ENCODE measurements at regions of chr16 and their contacts with region 1.

Region 1: GRCh38 chr16:11535471-11535870 is 51.2 kb downstream of the LITAF start:
- DNase-seq: no peak
- ATAC-seq: peak in 3 of 4 donors; percentile 17 to 43 (median 23)
- H3K4me3 ChIP-seq: no peak overlapping the region
- H3K27ac ChIP-seq: no peak overlapping the region
- H3K4me1 ChIP-seq: no peaks in the 10 kb centered on the region
- H3K27me3 ChIP-seq: no peaks in the 10 kb centered on the region
- CTCF ChIP-seq: no peak

Region 2: DNA sequence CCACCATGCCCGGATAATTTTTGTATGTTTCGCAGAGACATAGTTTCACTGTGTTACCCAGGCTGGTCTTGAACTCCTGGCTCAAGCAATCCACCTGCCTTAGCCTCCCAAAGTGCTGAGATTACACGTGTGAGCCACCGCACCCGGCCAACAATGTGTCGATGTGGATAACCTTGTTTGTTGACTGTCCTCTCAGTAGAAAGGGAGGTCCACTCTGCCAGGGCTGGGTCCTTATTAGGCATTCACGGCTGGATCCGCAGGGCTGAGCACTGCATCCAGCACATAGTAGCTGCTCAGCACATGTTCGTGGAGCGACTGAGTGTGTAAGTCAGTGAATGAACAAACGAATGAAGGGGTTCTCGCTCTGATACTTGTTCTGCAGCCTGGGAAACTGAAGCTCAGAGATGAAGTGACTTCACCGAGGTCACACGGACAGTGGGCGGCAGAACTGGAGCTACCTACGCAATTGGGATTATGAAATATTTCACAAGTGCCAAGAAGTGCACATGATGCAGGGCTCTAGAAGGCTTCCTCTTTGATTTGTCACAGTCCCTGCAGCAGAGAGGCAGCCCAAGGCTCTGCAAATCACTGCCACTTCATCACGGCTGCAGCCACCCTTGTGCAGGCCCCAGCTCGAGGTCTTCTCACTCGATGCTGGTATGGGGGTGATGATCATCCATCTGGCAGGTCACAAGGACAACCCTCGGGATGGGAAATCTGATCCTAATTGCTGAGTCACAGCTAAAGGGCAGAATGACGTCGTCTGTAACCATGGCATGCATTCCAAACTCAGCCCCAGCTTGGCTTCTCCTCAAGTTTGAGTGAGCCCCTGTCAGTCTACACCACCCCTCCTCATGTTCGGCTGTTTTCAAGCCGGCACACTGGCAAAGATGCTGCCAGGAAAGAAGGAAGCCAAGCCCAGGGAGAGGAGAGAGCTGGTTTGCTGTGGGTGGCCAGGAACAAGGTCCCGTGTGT is 104.7 kb after region 1 on chr16:
- intact Hi-C with region 1: loop called in 1 of 3 experiments (anchors 5 kb)
- DNase-seq: peak; percentile 60 to 86 (median 71)
- ATAC-seq: peak; percentile 72 to 93 (median 82)
- H3K4me3 ChIP-seq: no peak overlapping the region
- H3K27ac ChIP-seq: peak overlapping the region; percentile 54 to 92 (median 72)
- H3K4me1 ChIP-seq: peaks cover 5 to 22% (median 17%) of the 10 kb centered on the region in 3 donors
- H3K27me3 ChIP-seq: no peaks in the 10 kb centered on the region
- CTCF ChIP-seq: no peak

Region 3: DNA sequence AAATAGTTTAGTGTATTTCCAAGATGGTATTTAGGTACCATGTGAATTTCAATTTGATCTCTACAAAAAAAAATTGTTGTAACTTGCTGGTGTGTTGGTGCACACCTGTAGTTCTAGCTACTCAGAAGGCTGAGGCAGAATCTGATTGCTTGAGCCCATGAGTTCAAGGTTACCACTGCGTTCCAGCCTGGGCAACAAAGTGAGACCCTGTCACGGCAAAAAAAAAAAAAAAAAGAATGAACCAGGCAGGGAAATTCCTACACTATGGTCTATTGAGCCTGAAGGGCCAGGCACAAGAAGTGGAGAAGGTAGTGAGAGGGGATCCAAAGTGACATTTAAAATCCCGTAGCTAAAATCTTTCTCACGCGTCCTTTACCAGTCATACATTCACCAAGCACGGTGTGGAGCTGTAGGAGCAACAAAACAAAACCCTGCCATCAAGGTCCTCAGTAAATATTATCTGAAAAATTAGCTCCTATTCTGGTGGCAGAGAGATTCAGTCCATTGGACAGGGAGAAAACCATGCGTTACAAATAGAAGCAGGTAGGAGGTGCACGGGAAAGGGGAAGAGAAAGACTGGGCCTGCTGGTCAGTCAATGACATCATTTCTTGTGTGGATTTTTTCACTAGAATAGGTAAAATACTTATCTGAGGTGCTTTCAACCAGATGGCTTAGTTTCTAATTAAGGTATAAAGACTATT is 179.9 kb after region 1 on chr16:
- intact Hi-C with region 1: loop called in 1 of 3 experiments (anchors 10 kb)
- DNase-seq: no peak
- ATAC-seq: peak; percentile 47 to 75 (median 63)
- H3K4me3 ChIP-seq: no peak overlapping the region
- H3K27ac ChIP-seq: peak overlapping the region; percentile 29 to 79 (median 60)
- H3K4me1 ChIP-seq: peaks cover 37 to 50% (median 43%) of the 10 kb centered on the region in 3 donors
- H3K27me3 ChIP-seq: no peaks in the 10 kb centered on the region
- CTCF ChIP-seq: no peak

Region 4: DNA sequence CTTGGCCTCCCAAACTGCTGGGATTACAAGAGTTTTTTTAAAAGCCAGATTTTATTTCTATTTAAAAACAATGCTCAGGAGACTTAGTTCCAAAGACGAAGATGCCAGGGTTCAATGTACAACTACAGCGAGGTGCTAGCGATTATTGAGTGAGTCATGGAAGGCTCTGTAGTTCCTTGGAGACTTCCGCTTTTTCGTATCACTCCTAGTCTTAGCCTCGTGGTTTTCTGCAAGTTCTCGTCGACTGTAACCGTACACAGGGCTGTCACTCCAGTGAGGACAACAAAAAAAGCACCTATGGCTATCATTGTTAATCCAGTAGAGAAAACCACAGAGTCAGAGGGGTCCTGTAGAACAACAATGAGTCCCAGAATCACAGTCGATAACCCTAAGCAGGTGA is 284.3 kb after region 1 on chr16:
- intact Hi-C with region 1: loop called in 1 of 3 experiments (anchors 10 kb)
- DNase-seq: no peak
- ATAC-seq: peak in 2 of 4 donors; percentile 25 to 43
- H3K4me3 ChIP-seq: no peak overlapping the region
- H3K27ac ChIP-seq: no peak overlapping the region
- H3K4me1 ChIP-seq: no peaks in the 10 kb centered on the region
- H3K27me3 ChIP-seq: no peaks in the 10 kb centered on the region
- CTCF ChIP-seq: no peak

Measured in pancreas (tissue), 10 donors.